ENCODE measurements at regions of chr22 and their contacts with region 1.

Region 1: DNA sequence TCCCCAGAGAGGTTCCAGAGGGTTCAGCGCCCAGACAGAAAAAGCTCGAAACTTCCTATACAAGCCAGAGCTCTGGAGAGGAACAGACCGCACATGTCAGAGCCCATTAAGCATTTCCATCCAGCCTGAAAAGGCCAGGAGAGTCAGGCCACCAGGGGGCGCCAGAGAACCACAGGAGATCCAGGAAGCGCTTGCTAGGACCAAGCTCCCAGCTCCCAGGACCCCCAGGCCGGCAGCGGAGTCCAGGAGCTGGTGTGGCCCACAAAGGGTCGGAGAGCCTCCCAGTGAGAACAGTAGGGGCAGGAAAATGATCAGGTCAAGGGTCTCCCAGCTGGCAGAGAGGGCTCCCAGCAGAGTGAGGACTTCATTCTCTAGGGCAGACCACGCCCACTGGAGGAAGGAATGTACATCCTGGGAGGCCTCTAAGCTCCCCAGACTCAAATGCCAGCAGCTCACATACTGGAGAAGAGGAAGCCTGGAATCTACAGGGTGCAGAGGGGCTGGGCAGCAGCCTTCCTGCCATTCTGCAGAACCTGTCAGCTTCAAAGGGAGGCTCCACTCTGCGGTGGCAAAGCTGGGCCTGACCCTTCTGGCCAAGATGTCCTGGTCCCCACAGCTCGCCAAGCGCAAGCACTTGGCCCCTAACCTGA is 2.1 kb upstream of the MEI1 start:
- DNase-seq: peak; percentile 94
- H3K4me3 Mint-ChIP-seq: no peak overlapping the region
- H3K27ac Mint-ChIP-seq: peak overlapping the region; percentile 46
- H3K4me1 Mint-ChIP-seq: peaks cover 11% of the 10 kb centered on the region
- H3K27me3 Mint-ChIP-seq: no peaks in the 10 kb centered on the region

Region 2: GRCh38 chr22:41666661-41667258 is 30.5 kb before region 1 on chr22:
- CTCF ChIA-PET with region 1: interaction called, 28 read pairs
- POLR2A ChIA-PET with region 1: interaction called, 6 read pairs
- intact Hi-C with region 1: no loop called
- DNase-seq: peak; percentile 97
- H3K4me3 Mint-ChIP-seq: peak overlapping the region; percentile 86
- H3K27ac Mint-ChIP-seq: peak overlapping the region; percentile 97
- H3K4me1 Mint-ChIP-seq: peaks cover 13% of the 10 kb centered on the region
- H3K27me3 Mint-ChIP-seq: no peaks in the 10 kb centered on the region

Region 3: DNA sequence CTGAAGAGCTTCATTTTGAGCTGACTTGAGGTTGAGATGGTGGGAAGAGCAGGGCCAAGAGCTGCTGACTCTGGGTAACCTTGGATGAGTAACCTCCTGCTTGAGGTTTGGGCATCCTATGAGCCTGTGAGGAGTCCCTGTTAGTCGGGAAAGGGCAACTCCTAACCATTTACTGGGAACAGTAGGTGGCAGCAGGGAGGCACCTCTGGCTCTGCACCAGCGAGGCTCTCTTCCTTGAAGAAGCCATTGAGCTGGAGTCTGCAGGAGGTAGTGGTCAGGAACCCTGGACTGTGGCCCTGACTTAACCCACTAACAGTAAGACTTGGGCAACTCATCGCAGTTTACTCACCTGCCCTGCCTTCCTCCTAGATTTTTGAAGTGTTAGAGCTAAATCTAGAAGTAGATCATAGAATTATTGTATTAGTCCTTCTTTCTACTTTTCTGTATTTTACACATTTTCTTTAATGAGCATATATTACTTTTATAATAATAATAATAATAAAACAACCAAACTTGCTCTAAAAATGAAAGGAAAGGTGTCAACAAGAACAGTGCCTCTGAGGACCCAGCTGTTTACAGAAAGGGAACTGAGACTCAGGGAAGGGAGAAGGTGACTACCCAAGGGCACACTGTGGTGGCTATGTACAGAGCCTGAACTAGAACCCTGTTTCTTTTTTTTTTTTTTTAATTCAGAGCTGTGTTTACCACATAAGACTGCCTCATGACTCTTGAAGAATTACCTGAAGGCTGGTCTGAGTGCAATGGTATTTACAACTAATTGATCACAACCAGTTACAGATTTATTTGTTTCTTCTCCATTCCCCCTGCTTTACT is 49.5 kb after region 1 on chr22:
- CTCF ChIA-PET with region 1: interaction called, 25 read pairs
- POLR2A ChIA-PET with region 1: interaction called, 3 read pairs
- intact Hi-C with region 1: no loop called
- DNase-seq: peak; percentile 72
- H3K4me3 Mint-ChIP-seq: no peak overlapping the region
- H3K27ac Mint-ChIP-seq: no peak overlapping the region
- H3K4me1 Mint-ChIP-seq: peaks cover 6% of the 10 kb centered on the region
- H3K27me3 Mint-ChIP-seq: peaks cover 11% of the 10 kb centered on the region

Region 4: DNA sequence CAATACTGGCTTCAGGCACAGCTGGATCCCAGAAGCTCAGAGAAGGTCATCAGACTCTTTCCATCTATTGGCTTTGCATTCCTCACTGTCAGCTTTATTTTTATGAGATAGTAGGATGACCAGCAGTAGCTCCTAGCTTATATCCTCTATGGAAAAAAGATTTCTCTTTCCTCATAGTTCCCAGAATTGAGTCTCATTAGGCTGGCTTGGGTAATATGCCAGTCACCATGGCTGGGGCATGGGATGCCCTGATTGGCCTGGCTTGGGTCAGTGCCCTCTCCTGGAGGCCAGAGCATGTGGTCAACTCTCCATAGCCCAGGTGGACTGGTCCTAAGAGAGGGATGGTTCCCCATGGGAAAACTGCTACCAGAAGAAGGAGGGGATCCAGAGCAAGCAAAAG is 89.2 kb after region 1 on chr22:
- CTCF ChIA-PET with region 1: interaction called, 32 read pairs
- POLR2A ChIA-PET with region 1: interaction called, 6 read pairs
- intact Hi-C with region 1: loop called (anchors 5 kb)
- DNase-seq: no peak
- H3K4me3 Mint-ChIP-seq: no peak overlapping the region
- H3K27ac Mint-ChIP-seq: no peak overlapping the region
- H3K4me1 Mint-ChIP-seq: peaks cover 34% of the 10 kb centered on the region
- H3K27me3 Mint-ChIP-seq: no peaks in the 10 kb centered on the region

Region 5: DNA sequence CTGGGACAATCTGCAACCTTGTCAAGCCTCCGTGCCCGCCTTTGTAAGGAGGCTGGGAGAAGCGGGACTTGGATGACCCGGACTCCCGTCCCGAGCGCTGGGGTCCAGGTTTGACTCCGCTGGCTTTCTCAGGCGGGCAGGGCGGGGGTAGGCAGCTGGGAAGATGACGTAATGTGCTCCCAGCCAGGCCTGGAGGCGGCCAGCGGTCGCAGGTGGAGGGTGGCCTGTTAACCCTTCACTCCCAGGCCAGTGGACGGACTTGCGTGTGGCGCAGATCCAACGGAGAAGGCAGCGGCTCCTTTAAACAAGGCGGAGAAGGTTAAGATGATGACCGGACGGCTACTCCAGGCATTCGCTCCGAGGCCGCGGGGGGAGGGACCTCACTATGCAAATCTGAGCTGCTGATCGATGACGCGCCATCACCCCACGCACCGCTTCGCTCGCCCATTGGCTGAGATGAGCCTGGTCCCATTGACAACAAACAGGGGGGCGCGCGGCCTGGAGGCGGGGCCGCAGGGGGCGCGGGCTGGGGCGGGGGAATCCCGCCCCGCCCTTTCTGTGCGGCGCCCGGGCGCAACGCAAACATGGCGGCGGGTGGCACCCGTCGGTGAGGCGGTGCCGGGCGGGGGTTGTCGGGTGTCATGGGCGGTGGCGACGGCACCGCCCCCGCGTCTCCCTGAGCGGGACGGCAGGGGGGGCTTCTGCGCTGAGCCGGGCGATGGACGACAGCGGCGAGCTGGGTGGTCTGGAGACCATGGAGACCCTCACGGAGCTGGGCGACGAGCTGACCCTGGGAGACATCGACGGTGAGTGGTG is 135.5 kb after region 1 on chr22 and contains the start of gene SREBF2:
- CTCF ChIA-PET with region 1: interaction called, 10 read pairs
- POLR2A ChIA-PET with region 1: interaction called, 3 read pairs
- intact Hi-C with region 1: no loop called
- DNase-seq: peak; percentile 100
- H3K4me3 Mint-ChIP-seq: peak within 1 kb of the TSS; percentile 98
- H3K27ac Mint-ChIP-seq: peak within 1 kb of the TSS; percentile 99
- H3K4me1 Mint-ChIP-seq: peaks cover 44% of the 10 kb centered on the region
- H3K27me3 Mint-ChIP-seq: no peaks in the 10 kb centered on the region
- total RNA-seq, gene SREBF2: 131 to 137 TPM

Region 6: GRCh38 chr22:41925655-41926460 is 228.6 kb after region 1 on chr22:
- CTCF ChIA-PET with region 1: interaction called, 15 read pairs
- POLR2A ChIA-PET with region 1: no interaction called
- intact Hi-C with region 1: no loop called
- DNase-seq: peak; percentile 86
- H3K4me3 Mint-ChIP-seq: peak overlapping the region; percentile 71
- H3K27ac Mint-ChIP-seq: no peak overlapping the region
- H3K4me1 Mint-ChIP-seq: peaks cover 31% of the 10 kb centered on the region
- H3K27me3 Mint-ChIP-seq: peaks cover 6% of the 10 kb centered on the region

Region 7: DNA sequence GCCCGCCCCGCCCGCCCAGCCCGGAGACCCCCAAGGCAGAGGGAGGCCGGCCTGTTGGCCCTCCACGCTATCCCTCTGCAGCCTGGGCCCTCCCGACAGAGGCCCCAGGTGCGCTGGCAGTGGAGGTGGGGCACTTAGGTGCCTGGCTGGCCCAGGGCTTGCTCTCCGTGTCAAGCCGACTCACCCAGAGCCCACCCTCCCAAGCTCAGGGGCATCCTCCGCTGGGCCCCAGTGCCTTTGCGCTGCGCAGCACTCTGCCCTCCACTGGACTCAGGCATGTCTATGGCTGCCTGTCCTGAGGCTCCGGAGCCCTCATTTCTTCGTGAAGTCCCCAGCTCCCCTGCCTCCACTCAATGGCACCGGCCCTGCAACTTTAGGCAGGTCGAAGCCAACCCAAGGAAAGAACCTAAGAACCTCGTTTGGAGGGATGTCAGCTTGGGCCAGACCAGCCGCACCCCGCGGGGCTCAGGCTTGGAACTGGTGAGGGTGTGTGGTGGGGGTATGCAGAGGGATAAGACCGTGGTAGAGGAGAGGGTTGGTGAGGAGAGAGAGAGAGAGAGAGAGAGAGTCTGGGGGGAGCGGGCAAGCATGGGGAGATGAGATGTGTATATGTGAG is 260.8 kb after region 1 on chr22:
- CTCF ChIA-PET with region 1: interaction called, 8 read pairs
- POLR2A ChIA-PET with region 1: no interaction called
- intact Hi-C with region 1: loop called (anchors 5 kb)
- DNase-seq: no peak
- H3K4me3 Mint-ChIP-seq: no peak overlapping the region
- H3K27ac Mint-ChIP-seq: no peak overlapping the region
- H3K4me1 Mint-ChIP-seq: peaks cover 9% of the 10 kb centered on the region
- H3K27me3 Mint-ChIP-seq: no peaks in the 10 kb centered on the region